ENCODE measurements at regions of chr13 and their contacts with region 1.

Region 1: GRCh38 chr13:29508130-29508875 is 87.2 kb downstream of the SLC7A1 start:
- DNase-seq: peak; percentile 54 to 87 (median 77)
- ATAC-seq: peak; percentile 65
- H3K4me3 ChIP-seq: no peak overlapping the region
- H3K4me3 Mint-ChIP-seq: no peak overlapping the region
- H3K27ac ChIP-seq: no peak overlapping the region
- H3K27ac Mint-ChIP-seq: no peak overlapping the region
- H3K4me1 ChIP-seq: no peaks in the 10 kb centered on the region
- H3K4me1 Mint-ChIP-seq: no peaks in the 10 kb centered on the region
- H3K27me3 ChIP-seq: no peaks in the 10 kb centered on the region
- H3K27me3 Mint-ChIP-seq: peaks cover 6% of the 10 kb centered on the region
- CTCF ChIP-seq: peak; percentile 83

Region 2: GRCh38 chr13:29496240-29496712 is 12.0 kb before region 1 on chr13:
- CTCF ChIA-PET with region 1: interaction called, 36 read pairs
- POLR2A ChIA-PET with region 1: no interaction called
- intact Hi-C with region 1: no loop called
- DNase-seq: no peak
- ATAC-seq: no peak
- H3K4me3 ChIP-seq: no peak overlapping the region
- H3K4me3 Mint-ChIP-seq: no peak overlapping the region
- H3K27ac ChIP-seq: no peak overlapping the region
- H3K27ac Mint-ChIP-seq: no peak overlapping the region
- H3K4me1 ChIP-seq: no peaks in the 10 kb centered on the region
- H3K4me1 Mint-ChIP-seq: peaks cover 6% of the 10 kb centered on the region
- H3K27me3 ChIP-seq: peaks cover 0 to 9% of the 10 kb centered on the region in 2 experiments
- H3K27me3 Mint-ChIP-seq: peaks cover 28% of the 10 kb centered on the region
- CTCF ChIP-seq: no peak

Region 3: GRCh38 chr13:29522044-29522685 is 13.9 kb after region 1 on chr13:
- CTCF ChIA-PET with region 1: interaction called, 30 read pairs
- POLR2A ChIA-PET with region 1: interaction called, 7 read pairs
- intact Hi-C with region 1: no loop called
- DNase-seq: no peak
- ATAC-seq: no peak
- H3K4me3 ChIP-seq: no peak overlapping the region
- H3K4me3 Mint-ChIP-seq: no peak overlapping the region
- H3K27ac ChIP-seq: no peak overlapping the region
- H3K27ac Mint-ChIP-seq: no peak overlapping the region
- H3K4me1 ChIP-seq: no peaks in the 10 kb centered on the region
- H3K4me1 Mint-ChIP-seq: no peaks in the 10 kb centered on the region
- H3K27me3 ChIP-seq: no peaks in the 10 kb centered on the region
- H3K27me3 Mint-ChIP-seq: no peaks in the 10 kb centered on the region
- CTCF ChIP-seq: no peak

Region 4: GRCh38 chr13:29707876-29708543 is 199.7 kb after region 1 on chr13:
- CTCF ChIA-PET with region 1: interaction called, 89 read pairs
- POLR2A ChIA-PET with region 1: no interaction called
- intact Hi-C with region 1: loop called (anchors 1 kb)
- DNase-seq: peak; percentile 4 to 68 (median 29)
- ATAC-seq: peak; percentile 65
- H3K4me3 ChIP-seq: no peak overlapping the region
- H3K4me3 Mint-ChIP-seq: no peak overlapping the region
- H3K27ac ChIP-seq: no peak overlapping the region
- H3K27ac Mint-ChIP-seq: no peak overlapping the region
- H3K4me1 ChIP-seq: no peaks in the 10 kb centered on the region
- H3K4me1 Mint-ChIP-seq: no peaks in the 10 kb centered on the region
- H3K27me3 ChIP-seq: no peaks in the 10 kb centered on the region
- H3K27me3 Mint-ChIP-seq: peaks cover 9% of the 10 kb centered on the region
- CTCF ChIP-seq: peak; percentile 12

Region 5: DNA sequence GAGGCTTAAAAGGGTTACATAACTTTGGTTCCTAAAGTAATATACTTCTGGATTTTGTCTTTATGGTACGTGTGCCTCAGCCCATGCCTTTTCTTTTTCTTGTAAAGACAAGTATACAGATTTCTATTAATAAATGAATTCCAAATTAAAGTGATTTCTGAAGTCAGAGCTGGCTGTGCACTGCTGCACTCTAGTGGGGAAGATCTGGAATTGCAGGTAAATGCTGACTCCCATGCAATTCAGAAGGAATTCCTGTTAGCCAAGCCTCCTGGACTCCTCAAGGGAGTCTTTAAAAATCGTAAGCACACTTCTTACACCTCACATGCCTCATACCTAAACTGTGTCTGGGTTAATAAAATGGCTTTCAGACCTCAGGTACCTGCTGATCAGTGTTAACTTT is 205.5 kb after region 1 on chr13:
- CTCF ChIA-PET with region 1: interaction called, 89 read pairs
- POLR2A ChIA-PET with region 1: no interaction called
- intact Hi-C with region 1: loop called in 1 of 2 experiments (anchors 1 kb)
- DNase-seq: peak in 2 of 9 experiments; percentile 10 to 30
- ATAC-seq: no peak
- H3K4me3 ChIP-seq: no peak overlapping the region
- H3K4me3 Mint-ChIP-seq: no peak overlapping the region
- H3K27ac ChIP-seq: no peak overlapping the region
- H3K27ac Mint-ChIP-seq: no peak overlapping the region
- H3K4me1 ChIP-seq: no peaks in the 10 kb centered on the region
- H3K4me1 Mint-ChIP-seq: no peaks in the 10 kb centered on the region
- H3K27me3 ChIP-seq: no peaks in the 10 kb centered on the region
- H3K27me3 Mint-ChIP-seq: peaks cover 16% of the 10 kb centered on the region
- CTCF ChIP-seq: peak; percentile 52

Measured in CD8-positive, alpha-beta T cell (primary cell).